CD4-positive, alpha-beta T cell (primary cell): ENCODE measurements at regions of chr3 and their contacts with region 1.

Region 1: DNA sequence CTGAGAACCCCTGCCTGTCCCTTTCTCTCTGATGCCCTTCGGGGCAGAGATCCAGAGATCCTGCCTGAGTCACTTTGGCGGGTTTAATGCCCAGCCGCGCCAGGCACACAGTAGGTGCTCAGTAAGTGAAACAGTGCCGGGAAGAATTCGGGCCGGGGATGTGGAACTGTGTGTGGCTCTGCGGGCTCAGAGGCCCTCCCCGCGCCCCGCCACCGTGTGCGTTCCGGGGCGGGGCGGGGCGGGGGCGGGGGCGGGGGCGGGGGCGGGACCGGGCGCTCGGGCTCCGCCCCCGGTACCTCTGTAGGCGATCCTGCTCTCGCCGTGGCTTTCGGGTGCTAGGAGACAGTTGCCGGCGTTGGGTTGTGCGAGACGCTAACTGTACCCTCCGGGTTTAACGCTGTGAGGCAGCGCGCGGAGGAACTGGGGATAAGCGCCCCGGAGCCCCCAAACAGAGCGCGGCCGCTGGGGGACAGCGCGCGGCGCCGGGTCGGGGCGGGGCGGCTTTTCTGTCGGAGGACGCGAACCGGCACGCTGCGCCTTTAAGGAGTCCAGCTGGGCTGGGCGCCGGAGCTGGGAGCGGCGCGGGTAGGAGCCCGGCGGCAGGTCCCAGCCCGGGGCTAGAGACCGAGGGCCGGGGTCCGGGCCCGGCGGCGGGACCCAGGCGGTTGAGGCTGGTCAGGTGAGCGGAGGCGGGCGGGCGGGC is at the start of gene ABHD6:
- DNase-seq: peak; percentile 64 to 89 (median 79)
- ATAC-seq: peak; percentile 88
- H3K4me3 ChIP-seq: peak within 1 kb of the TSS; percentile 95
- H3K4me3 Mint-ChIP-seq: peak within 1 kb of the TSS; percentile 96
- H3K27ac ChIP-seq: peak within 1 kb of the TSS; percentile 24 to 57
- H3K27ac Mint-ChIP-seq: peak within 1 kb of the TSS; percentile 61
- H3K4me1 ChIP-seq: peaks cover 19% of the 10 kb centered on the region
- H3K4me1 Mint-ChIP-seq: peaks cover 14% of the 10 kb centered on the region
- H3K27me3 ChIP-seq: peaks cover 0 to 3% of the 10 kb centered on the region in 2 experiments
- H3K27me3 Mint-ChIP-seq: peaks cover 18% of the 10 kb centered on the region
- CTCF ChIP-seq: peak; percentile 16
- total RNA-seq, gene ABHD6: 0.71 to 1.9 TPM

Region 2: GRCh38 chr3:57597122-57597923 is 640.1 kb before region 1 on chr3 and contains the start of gene ARF4:
- CTCF ChIA-PET with region 1: no interaction called
- POLR2A ChIA-PET with region 1: interaction called, 3 read pairs
- intact Hi-C with region 1: loop called in 1 of 2 experiments (anchors 5 kb)
- DNase-seq: peak; percentile 97 to 100 (median 99)
- ATAC-seq: peak; percentile 87
- H3K4me3 ChIP-seq: peak within 1 kb of the TSS; percentile 92
- H3K4me3 Mint-ChIP-seq: peak within 1 kb of the TSS; percentile 85
- H3K27ac ChIP-seq: peak within 1 kb of the TSS; percentile 98 to 99
- H3K27ac Mint-ChIP-seq: peak within 1 kb of the TSS; percentile 97
- H3K4me1 ChIP-seq: peaks cover 33% of the 10 kb centered on the region
- H3K4me1 Mint-ChIP-seq: peaks cover 58% of the 10 kb centered on the region
- H3K27me3 ChIP-seq: no peaks in the 10 kb centered on the region
- H3K27me3 Mint-ChIP-seq: no peaks in the 10 kb centered on the region
- CTCF ChIP-seq: peak; percentile 48
- total RNA-seq, gene ARF4: 56.7 to 59.9 TPM

Region 3: DNA sequence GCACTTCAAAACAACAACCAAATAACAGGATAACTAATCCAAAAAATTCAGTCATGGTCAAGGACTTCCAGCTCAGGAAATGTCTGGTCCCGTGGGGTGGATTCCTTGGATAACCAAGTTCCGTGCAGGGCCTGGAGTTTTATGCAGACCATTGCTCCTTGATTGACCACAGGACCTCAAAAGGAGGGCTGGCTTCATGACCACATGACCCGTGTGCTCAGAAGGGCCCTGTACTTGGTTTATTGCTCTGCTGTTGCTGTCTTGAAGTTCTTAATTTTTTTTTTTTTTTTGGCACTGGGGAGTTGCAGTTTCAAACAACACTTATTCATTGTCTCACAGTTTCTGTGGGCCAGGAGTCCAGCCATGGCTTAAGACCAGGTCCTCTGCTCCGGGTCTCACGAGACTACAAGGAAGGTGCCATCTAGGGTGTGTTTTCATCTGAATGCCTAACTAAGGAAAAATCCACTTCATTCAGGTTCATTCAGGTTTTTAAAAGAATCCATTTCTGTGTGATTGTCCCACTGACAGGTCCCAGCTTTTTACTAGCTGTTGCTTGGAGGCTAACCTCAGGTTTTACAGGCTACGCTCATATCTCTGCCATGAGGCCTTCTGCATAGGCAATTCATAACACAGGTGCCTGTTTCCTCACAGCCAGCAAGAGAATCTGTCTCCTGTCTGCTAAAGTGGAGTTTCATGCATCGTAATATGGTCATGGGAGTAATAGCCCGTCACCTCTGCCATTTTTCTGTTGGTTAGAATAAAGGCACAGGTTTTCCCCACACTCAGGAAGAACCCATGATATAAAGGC is 163.9 kb before region 1 on chr3:
- CTCF ChIA-PET with region 1: no interaction called
- POLR2A ChIA-PET with region 1: no interaction called
- intact Hi-C with region 1: no loop called
- DNase-seq: no peak
- ATAC-seq: no peak
- H3K4me3 ChIP-seq: no peak overlapping the region
- H3K4me3 Mint-ChIP-seq: no peak overlapping the region
- H3K27ac ChIP-seq: no peak overlapping the region
- H3K27ac Mint-ChIP-seq: no peak overlapping the region
- H3K4me1 ChIP-seq: peaks cover 9% of the 10 kb centered on the region
- H3K4me1 Mint-ChIP-seq: peaks cover 48% of the 10 kb centered on the region
- H3K27me3 ChIP-seq: no peaks in the 10 kb centered on the region
- H3K27me3 Mint-ChIP-seq: no peaks in the 10 kb centered on the region
- CTCF ChIP-seq: no peak

Region 4: GRCh38 chr3:58218904-58219303 is 18.5 kb before region 1 on chr3:
- CTCF ChIA-PET with region 1: no interaction called
- POLR2A ChIA-PET with region 1: no interaction called
- intact Hi-C with region 1: no loop called
- DNase-seq: no peak
- ATAC-seq: no peak
- H3K4me3 ChIP-seq: no peak overlapping the region
- H3K4me3 Mint-ChIP-seq: no peak overlapping the region
- H3K27ac ChIP-seq: no peak overlapping the region
- H3K27ac Mint-ChIP-seq: no peak overlapping the region
- H3K4me1 ChIP-seq: peaks cover 6% of the 10 kb centered on the region
- H3K4me1 Mint-ChIP-seq: peaks cover 6% of the 10 kb centered on the region
- H3K27me3 ChIP-seq: no peaks in the 10 kb centered on the region
- H3K27me3 Mint-ChIP-seq: no peaks in the 10 kb centered on the region
- CTCF ChIP-seq: no peak

Region 5: GRCh38 chr3:58250093-58250707 is 12.8 kb after region 1 on chr3:
- CTCF ChIA-PET with region 1: no interaction called
- POLR2A ChIA-PET with region 1: no interaction called
- intact Hi-C with region 1: no loop called
- DNase-seq: no peak
- ATAC-seq: no peak
- H3K4me3 ChIP-seq: no peak overlapping the region
- H3K4me3 Mint-ChIP-seq: no peak overlapping the region
- H3K27ac ChIP-seq: no peak overlapping the region
- H3K27ac Mint-ChIP-seq: no peak overlapping the region
- H3K4me1 ChIP-seq: no peaks in the 10 kb centered on the region
- H3K4me1 Mint-ChIP-seq: no peaks in the 10 kb centered on the region
- H3K27me3 ChIP-seq: no peaks in the 10 kb centered on the region
- H3K27me3 Mint-ChIP-seq: no peaks in the 10 kb centered on the region
- CTCF ChIP-seq: no peak

Region 6: GRCh38 chr3:58342676-58343075 is 105.3 kb after region 1 on chr3:
- CTCF ChIA-PET with region 1: no interaction called
- POLR2A ChIA-PET with region 1: no interaction called
- intact Hi-C with region 1: no loop called
- DNase-seq: no peak
- ATAC-seq: no peak
- H3K4me3 ChIP-seq: no peak overlapping the region
- H3K4me3 Mint-ChIP-seq: no peak overlapping the region
- H3K27ac ChIP-seq: no peak overlapping the region
- H3K27ac Mint-ChIP-seq: no peak overlapping the region
- H3K4me1 ChIP-seq: no peaks in the 10 kb centered on the region
- H3K4me1 Mint-ChIP-seq: peaks cover 16% of the 10 kb centered on the region
- H3K27me3 ChIP-seq: no peaks in the 10 kb centered on the region
- H3K27me3 Mint-ChIP-seq: no peaks in the 10 kb centered on the region
- CTCF ChIP-seq: no peak

Region 7: GRCh38 chr3:58414538-58415197 is 177.3 kb after region 1 on chr3:
- CTCF ChIA-PET with region 1: no interaction called
- POLR2A ChIA-PET with region 1: no interaction called
- intact Hi-C with region 1: loop called in 1 of 2 experiments (anchors 5 kb)
- DNase-seq: peak in 13 of 14 experiments; percentile 8 to 76 (median 21)
- ATAC-seq: peak; percentile 88
- H3K4me3 ChIP-seq: no peak overlapping the region
- H3K4me3 Mint-ChIP-seq: no peak overlapping the region
- H3K27ac ChIP-seq: no peak overlapping the region
- H3K27ac Mint-ChIP-seq: no peak overlapping the region
- H3K4me1 ChIP-seq: no peaks in the 10 kb centered on the region
- H3K4me1 Mint-ChIP-seq: no peaks in the 10 kb centered on the region
- H3K27me3 ChIP-seq: no peaks in the 10 kb centered on the region
- H3K27me3 Mint-ChIP-seq: no peaks in the 10 kb centered on the region
- CTCF ChIP-seq: peak; percentile 75

Region 8: GRCh38 chr3:58433400-58434169 is 196.2 kb after region 1 on chr3 and contains the start of gene PDHB:
- CTCF ChIA-PET with region 1: no interaction called
- POLR2A ChIA-PET with region 1: interaction called, 3 read pairs
- intact Hi-C with region 1: loop called in 1 of 2 experiments (anchors 5 kb)
- DNase-seq: peak; percentile 77 to 94 (median 86)
- ATAC-seq: peak; percentile 96
- H3K4me3 ChIP-seq: peak within 1 kb of the TSS; percentile 93
- H3K4me3 Mint-ChIP-seq: peak within 1 kb of the TSS; percentile 90
- H3K27ac ChIP-seq: peak within 1 kb of the TSS; percentile 79 to 85
- H3K27ac Mint-ChIP-seq: peak within 1 kb of the TSS; percentile 86
- H3K4me1 ChIP-seq: peaks cover 20% of the 10 kb centered on the region
- H3K4me1 Mint-ChIP-seq: peaks cover 33% of the 10 kb centered on the region
- H3K27me3 ChIP-seq: no peaks in the 10 kb centered on the region
- H3K27me3 Mint-ChIP-seq: no peaks in the 10 kb centered on the region
- CTCF ChIP-seq: no peak
- total RNA-seq, gene PDHB: 31.1 to 31.5 TPM